OCI-LY7 (cell line): ENCODE measurements at regions of chr3 and their contacts with region 1.

Region 1: GRCh38 chr3:48194446-48195071 is 6.3 kb upstream of the CDC25A start:
- DNase-seq: peak; percentile 70
- H3K4me3 ChIP-seq: no peak overlapping the region
- H3K27ac ChIP-seq: no peak overlapping the region
- H3K4me1 ChIP-seq: peaks cover 15% of the 10 kb centered on the region
- CTCF ChIP-seq: peak; percentile 99

Region 2: DNA sequence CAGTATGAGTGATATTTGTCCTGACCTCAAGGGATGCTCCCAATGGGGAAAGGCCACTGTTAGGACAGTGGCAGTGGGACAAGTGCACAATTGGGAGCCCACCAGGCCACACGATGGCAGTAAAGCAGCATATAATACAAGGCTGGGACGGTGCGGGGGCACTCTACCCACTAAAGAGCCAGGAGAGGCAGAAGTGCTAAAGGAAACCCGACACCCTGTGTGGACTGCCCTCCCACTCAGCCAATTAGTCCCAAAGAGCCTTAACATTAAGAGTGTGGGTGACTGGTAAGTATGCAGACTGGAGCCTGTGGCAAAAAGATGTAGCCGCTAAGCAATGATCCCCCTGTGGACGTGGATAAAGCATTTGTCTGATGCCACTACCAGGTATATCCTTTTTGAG is 38.2 kb after region 1 on chr3:
- CTCF ChIA-PET with region 1: interaction called, 7 read pairs
- POLR2A ChIA-PET with region 1: no interaction called
- intact Hi-C with region 1: loop called (anchors 1 kb)
- DNase-seq: peak; percentile 90
- H3K4me3 ChIP-seq: peak overlapping the region; percentile 60
- H3K27ac ChIP-seq: peak overlapping the region; percentile 30
- H3K4me1 ChIP-seq: peaks cover 54% of the 10 kb centered on the region
- CTCF ChIP-seq: peak; percentile 98